ENCODE measurements at regions of chr7 and their contacts with region 1.

Region 1: DNA sequence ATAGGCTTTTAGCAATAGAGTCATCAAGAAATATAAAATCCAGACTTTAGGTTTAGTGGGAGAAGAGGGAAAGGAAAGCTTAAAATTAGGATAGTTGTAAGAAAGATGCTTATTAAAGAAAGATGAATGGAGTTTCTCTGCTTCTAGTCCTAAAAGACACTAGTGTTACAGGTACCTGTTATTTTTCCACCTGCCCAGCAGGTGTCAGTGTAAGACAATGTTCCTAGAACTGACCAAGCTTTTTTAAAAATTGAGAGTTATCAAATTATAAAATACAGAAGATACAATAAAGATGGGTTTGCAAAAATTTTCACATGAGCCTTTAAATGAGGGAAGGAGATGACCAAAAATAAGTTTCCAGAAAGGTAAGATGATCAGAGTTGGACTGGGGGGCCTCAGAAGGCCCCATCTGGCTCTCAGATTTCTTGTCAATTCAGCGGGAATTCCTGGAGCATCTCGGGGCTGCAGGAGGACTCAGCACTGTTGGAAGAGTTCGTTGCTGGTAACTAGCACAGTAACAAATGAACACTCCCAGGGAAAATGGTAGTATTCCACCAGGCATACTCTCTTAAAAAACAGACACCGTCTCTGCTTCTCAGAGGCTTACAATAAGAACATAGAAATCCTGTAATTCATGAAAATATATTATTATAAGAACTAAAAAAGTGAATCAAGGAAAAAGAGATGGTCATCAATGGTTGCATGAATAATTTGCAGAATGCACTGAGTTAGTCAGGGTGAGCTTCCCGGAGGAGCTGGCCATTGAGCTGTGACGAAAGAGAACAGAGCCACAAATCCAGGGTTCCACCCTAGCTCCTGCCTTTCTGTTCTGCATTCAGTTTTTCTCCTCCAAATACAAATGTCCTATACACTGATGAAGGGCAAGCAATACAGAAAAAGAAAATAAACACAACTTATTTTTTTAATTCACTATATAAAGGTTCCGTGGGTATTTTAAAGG is 71.8 kb upstream of the PIK3CG start:
- H3K4me3 ChIP-seq: no peak overlapping the region
- H3K27ac ChIP-seq: no peak overlapping the region
- H3K4me1 ChIP-seq: no peaks in the 10 kb centered on the region
- CTCF ChIP-seq: no peak

Region 2: GRCh38 chr7:106285051-106285854 is 508.0 kb before region 1 on chr7:
- CTCF ChIA-PET with region 1: no interaction called
- POLR2A ChIA-PET with region 1: no interaction called
- H3K4me3 ChIP-seq: peak overlapping the region; percentile 86
- H3K27ac ChIP-seq: peak overlapping the region; percentile 82
- H3K4me1 ChIP-seq: peaks cover 5% of the 10 kb centered on the region; the same call in 1 of the 2 replicates
- CTCF ChIP-seq: no peak

Region 3: GRCh38 chr7:106623853-106624252 is 169.4 kb before region 1 on chr7:
- CTCF ChIA-PET with region 1: no interaction called
- POLR2A ChIA-PET with region 1: no interaction called
- H3K4me3 ChIP-seq: no peak overlapping the region
- H3K27ac ChIP-seq: no peak overlapping the region
- H3K4me1 ChIP-seq: no peaks in the 10 kb centered on the region
- CTCF ChIP-seq: no peak

Region 4: GRCh38 chr7:106812027-106812643 is 18.8 kb after region 1 on chr7:
- CTCF ChIA-PET with region 1: interaction called, 11 read pairs
- POLR2A ChIA-PET with region 1: no interaction called
- H3K4me3 ChIP-seq: no peak overlapping the region
- H3K27ac ChIP-seq: no peak overlapping the region
- H3K4me1 ChIP-seq: no peaks in the 10 kb centered on the region
- CTCF ChIP-seq: no peak

Region 5: GRCh38 chr7:106947244-106947728 is 154.0 kb after region 1 on chr7:
- CTCF ChIA-PET with region 1: interaction called, 13 read pairs
- POLR2A ChIA-PET with region 1: no interaction called
- H3K4me3 ChIP-seq: no peak overlapping the region
- H3K27ac ChIP-seq: no peak overlapping the region
- H3K4me1 ChIP-seq: no peaks in the 10 kb centered on the region
- CTCF ChIP-seq: peak; percentile 40; the same call in 1 of the 2 replicates